Naive thymus-derived CD4-positive, alpha-beta T cell (primary cell): ENCODE measurements at regions of chr5 and their contacts with region 1.

Region 1: DNA sequence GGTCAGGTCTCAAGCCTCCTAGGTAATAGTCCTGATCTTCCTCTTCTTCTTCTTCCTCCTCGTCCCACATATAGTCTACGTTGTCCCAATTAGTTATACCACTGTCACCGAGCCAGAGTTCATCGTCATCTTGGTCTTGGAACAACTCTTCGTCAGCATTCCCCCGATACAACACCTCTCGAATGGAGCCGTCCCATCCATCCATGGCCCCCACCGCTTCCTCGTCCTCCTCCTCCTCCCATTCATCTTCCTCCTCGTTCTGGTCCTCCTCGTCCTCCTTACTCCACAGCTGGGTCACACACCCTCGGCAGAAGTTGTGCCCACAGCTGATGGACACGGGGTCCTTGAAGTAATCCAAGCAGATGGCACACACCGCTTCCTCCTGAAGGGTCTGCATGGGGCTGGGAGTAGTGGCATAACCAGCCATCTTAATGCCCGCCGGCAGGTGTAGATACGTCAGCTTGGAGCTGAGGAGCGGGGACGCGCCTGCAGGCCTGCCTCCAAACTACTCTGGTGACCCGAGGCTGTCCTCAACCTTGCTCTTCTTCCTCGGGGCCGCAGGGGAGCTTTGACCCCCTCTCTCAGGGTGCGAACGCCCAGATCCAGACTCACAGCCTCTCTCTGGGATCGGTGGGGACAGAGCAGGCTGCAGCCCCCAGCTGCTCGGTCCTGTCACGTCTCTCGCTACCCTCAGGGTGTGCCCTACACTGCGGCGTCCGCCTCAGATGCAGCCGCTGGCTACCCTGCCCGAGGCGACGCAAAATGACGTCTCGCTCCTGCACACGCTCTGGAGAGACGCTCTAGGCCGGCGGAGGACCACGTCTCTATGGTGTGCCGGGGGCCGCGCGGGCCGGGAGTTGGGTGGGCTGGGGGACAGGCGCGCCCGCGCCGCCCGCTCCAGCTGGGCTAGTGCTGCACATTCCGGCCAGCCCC is at the start of gene TRIM52:
- DNase-seq: peak; percentile 79 to 91 (median 90)
- ATAC-seq: peak; percentile 93
- H3K4me3 ChIP-seq: peak within 1 kb of the TSS; percentile 93
- H3K4me3 Mint-ChIP-seq: peak within 1 kb of the TSS; percentile 94 to 100 (median 98)
- H3K27ac ChIP-seq: peak within 1 kb of the TSS; percentile 97
- H3K27ac Mint-ChIP-seq: peak within 1 kb of the TSS; percentile 95 to 99 (median 98)
- H3K4me1 ChIP-seq: peaks cover 31 to 39% of the 10 kb centered on the region in 2 donors
- H3K4me1 Mint-ChIP-seq: peaks cover 34 to 60% (median 56%) of the 10 kb centered on the region in 7 donors
- H3K27me3 ChIP-seq: no peaks in the 10 kb centered on the region
- H3K27me3 Mint-ChIP-seq: no peaks in the 10 kb centered on the region
- total RNA-seq, gene TRIM52: 31.4 to 71.6 (median 35.7) TPM

Region 2: GRCh38 chr5:180494060-180494509 is 766.6 kb before region 1 on chr5 and contains the start of gene CNOT6:
- CTCF ChIA-PET with region 1: no interaction called
- POLR2A ChIA-PET with region 1: no interaction called
- intact Hi-C with region 1: loop called in 1 of 2 experiments (anchors 10 kb)
- DNase-seq: peak; percentile 91 to 98 (median 95)
- ATAC-seq: peak; percentile 98
- H3K4me3 ChIP-seq: peak within 1 kb of the TSS; percentile 83
- H3K4me3 Mint-ChIP-seq: peak within 1 kb of the TSS; percentile 85 to 99 (median 96)
- H3K27ac ChIP-seq: peak within 1 kb of the TSS; percentile 98
- H3K27ac Mint-ChIP-seq: peak within 1 kb of the TSS; percentile 84 to 98 (median 95)
- H3K4me1 ChIP-seq: peaks cover 10 to 27% of the 10 kb centered on the region in 2 donors
- H3K4me1 Mint-ChIP-seq: peaks cover 29 to 42% (median 35%) of the 10 kb centered on the region in 7 donors
- H3K27me3 ChIP-seq: no peaks in the 10 kb centered on the region
- H3K27me3 Mint-ChIP-seq: no peaks in the 10 kb centered on the region
- total RNA-seq, gene CNOT6: 22.8 to 41.9 (median 30.0) TPM

Region 3: DNA sequence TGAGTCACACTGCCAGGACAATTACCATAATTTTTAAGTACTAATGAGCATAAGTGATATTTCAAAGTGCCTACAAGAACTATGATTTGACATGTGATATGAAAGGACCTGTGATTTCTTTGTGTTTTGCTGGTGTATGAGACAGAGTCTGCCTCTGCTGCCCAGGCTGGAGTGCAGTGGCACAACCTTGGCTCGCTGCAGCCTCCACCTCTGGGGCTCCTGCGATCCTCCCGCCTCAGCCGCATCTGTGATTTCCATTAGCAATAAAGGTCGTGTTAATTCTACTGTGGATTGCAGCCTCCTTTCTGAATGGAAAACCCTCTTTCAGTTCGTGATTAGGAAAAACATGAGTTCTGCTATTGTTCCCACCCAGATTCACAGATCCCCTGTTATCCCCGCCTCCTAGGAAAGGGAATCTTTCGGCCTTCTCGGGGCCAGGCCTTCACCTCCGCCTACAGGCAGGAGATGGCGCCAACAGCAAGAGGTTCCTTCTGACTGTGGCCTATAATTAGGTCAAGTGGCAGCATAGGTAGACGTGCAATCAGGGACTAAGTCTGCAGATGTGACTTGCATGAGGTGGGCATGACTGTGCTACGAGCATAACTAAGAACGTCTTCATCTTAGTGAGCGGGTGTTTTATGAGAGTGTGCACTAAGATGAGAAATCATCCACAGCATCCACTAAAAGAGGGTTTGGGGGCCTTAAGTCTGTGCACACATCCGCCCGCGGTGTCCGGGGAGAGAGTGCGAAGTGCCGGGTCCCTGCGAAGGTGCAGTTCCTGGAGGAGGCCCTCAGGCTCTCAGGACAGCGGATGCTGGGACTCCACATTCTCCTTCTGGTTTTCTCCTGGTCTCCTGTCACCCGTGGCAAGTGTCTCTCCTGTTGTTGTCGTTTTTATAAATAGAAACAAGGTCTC is 78.7 kb before region 1 on chr5:
- CTCF ChIA-PET with region 1: interaction called, 16 read pairs
- POLR2A ChIA-PET with region 1: interaction called, 32 read pairs
- intact Hi-C with region 1: loop called (anchors 1 kb)
- DNase-seq: peak in 7 of 9 donors; percentile 38 to 72 (median 68)
- ATAC-seq: peak; percentile 81
- H3K4me3 ChIP-seq: no peak overlapping the region
- H3K4me3 Mint-ChIP-seq: peak overlapping the region; percentile 11 to 95 (median 50)
- H3K27ac ChIP-seq: no peak overlapping the region
- H3K27ac Mint-ChIP-seq: peak overlapping the region in 8 of 9 donors; percentile 2 to 92 (median 87)
- H3K4me1 ChIP-seq: peaks cover 3 to 8% of the 10 kb centered on the region in 2 donors
- H3K4me1 Mint-ChIP-seq: peaks cover 6 to 44% (median 31%) of the 10 kb centered on the region in 7 donors
- H3K27me3 ChIP-seq: no peaks in the 10 kb centered on the region
- H3K27me3 Mint-ChIP-seq: peaks cover 0 to 17% (median 0%) of the 10 kb centered on the region in 5 donors

Region 4: DNA sequence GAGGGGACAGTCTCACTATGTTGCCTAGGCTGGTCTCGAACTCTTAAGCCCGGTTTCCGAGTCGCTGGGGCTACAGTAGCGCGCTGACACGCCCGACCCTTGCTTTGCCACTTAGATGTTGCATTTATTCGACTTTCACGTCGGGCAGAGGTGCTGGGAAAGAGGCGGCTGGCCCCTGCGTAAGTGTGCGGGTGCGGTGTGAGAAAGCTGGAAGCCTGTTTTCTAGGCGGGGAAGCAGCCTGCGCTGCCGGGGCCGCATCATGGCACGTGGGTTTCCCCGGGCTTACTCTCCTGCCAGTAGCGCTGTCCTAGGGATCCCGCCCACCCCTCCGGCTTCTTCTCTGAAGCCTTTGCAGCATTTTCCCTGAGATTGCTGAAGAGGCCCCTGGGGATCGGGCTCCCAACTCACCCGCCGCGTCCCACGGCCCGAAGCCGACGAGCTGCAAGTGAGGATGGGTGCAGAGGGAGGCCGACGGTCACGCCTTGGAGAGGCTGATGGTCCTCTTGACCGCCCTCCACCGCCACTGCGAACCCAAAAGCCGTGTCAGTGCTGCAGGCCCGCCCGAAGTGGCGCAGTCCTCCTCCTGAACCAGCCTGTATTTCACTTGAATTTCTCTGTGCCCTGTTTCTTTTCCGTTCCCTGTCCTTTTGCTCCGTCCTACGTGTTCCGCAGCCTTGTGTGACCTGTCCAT is 43.4 kb before region 1 on chr5:
- CTCF ChIA-PET with region 1: interaction called, 4 read pairs
- POLR2A ChIA-PET with region 1: interaction called, 182 read pairs
- intact Hi-C with region 1: loop called in 1 of 2 experiments (anchors 1 kb)
- DNase-seq: peak; percentile 35 to 73 (median 63)
- ATAC-seq: peak; percentile 34
- H3K4me3 ChIP-seq: peak overlapping the region; percentile 85
- H3K4me3 Mint-ChIP-seq: peak overlapping the region; percentile 91 to 100 (median 94)
- H3K27ac ChIP-seq: peak overlapping the region; percentile 74
- H3K27ac Mint-ChIP-seq: peak overlapping the region; percentile 89 to 100 (median 96)
- H3K4me1 ChIP-seq: peaks cover 17 to 29% of the 10 kb centered on the region in 2 donors
- H3K4me1 Mint-ChIP-seq: peaks cover 15 to 62% (median 49%) of the 10 kb centered on the region in 7 donors
- H3K27me3 ChIP-seq: no peaks in the 10 kb centered on the region
- H3K27me3 Mint-ChIP-seq: peaks cover 0 to 12% (median 0%) of the 10 kb centered on the region in 5 donors

Region 5: DNA sequence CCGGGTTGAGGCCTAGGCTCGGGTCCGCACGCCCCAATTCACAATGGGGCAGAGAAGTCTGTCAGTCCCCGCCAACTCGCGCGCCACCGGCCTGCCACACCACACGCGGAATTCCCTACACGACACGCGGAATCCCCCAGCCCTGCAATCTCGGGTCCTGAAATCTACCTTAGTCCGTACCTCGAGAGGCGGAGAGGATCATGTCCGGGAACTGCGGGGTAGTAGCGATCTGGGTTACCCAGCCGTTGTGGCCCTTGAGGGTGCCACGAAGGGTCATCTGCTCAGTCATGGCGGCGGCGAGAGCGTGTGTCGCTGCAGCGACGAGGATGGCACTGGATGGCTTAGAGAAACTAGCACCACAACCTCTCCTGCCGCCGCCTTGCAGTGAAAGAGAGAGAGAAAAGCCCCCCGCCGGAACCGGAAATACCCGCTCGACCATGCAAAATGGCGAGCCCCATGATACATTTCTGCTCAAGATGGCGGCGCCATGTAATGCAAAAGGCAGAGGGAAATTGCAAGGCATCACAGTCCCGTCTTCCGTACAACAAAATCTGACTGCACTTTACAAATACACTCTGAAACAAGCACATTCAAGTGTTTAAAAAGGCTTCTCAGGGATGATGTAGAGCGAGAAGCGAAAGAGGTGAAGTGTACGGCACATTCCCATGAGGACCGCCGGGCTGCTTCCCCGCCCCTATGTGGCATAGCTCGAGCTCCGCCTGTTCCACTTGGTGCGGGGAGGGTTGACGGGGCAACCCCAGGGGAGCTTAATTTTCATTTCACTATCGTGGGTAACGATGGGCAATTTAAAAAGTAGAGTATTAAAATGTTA is 16.9 kb before region 1 on chr5 and contains the start of gene RACK1:
- CTCF ChIA-PET with region 1: interaction called, 10 read pairs
- POLR2A ChIA-PET with region 1: interaction called, 305 read pairs
- intact Hi-C with region 1: loop called (anchors 1 kb)
- DNase-seq: peak; percentile 77 to 93 (median 91)
- ATAC-seq: peak; percentile 83
- H3K4me3 ChIP-seq: peak within 1 kb of the TSS; percentile 99
- H3K4me3 Mint-ChIP-seq: peak within 1 kb of the TSS; percentile 91 to 99 (median 98)
- H3K27ac ChIP-seq: peak within 1 kb of the TSS; percentile 91
- H3K27ac Mint-ChIP-seq: peak within 1 kb of the TSS; percentile 93 to 100 (median 97)
- H3K4me1 ChIP-seq: peaks cover 39 to 46% of the 10 kb centered on the region in 2 donors
- H3K4me1 Mint-ChIP-seq: peaks cover 45 to 78% (median 66%) of the 10 kb centered on the region in 7 donors
- H3K27me3 ChIP-seq: no peaks in the 10 kb centered on the region
- H3K27me3 Mint-ChIP-seq: no peaks in the 10 kb centered on the region
- total RNA-seq, gene RACK1: 1,703 to 2,739 (median 2,322) TPM